PC-3 (cell line): ENCODE measurements at regions of chr4 and their contacts with region 1.

Region 1: GRCh38 chr4:64617800-64618199 is 208.6 kb upstream of the TECRL start:
- DNase-seq: peak; percentile 77
- ATAC-seq: peak; percentile 67
- H3K4me3 ChIP-seq: no peak overlapping the region
- H3K27ac ChIP-seq: no peak overlapping the region
- H3K4me1 ChIP-seq: peaks cover 4% of the 10 kb centered on the region; the same call in 1 of the 2 replicates
- H3K27me3 ChIP-seq: no peaks in the 10 kb centered on the region
- CTCF ChIP-seq: peak; percentile 80

Region 2: DNA sequence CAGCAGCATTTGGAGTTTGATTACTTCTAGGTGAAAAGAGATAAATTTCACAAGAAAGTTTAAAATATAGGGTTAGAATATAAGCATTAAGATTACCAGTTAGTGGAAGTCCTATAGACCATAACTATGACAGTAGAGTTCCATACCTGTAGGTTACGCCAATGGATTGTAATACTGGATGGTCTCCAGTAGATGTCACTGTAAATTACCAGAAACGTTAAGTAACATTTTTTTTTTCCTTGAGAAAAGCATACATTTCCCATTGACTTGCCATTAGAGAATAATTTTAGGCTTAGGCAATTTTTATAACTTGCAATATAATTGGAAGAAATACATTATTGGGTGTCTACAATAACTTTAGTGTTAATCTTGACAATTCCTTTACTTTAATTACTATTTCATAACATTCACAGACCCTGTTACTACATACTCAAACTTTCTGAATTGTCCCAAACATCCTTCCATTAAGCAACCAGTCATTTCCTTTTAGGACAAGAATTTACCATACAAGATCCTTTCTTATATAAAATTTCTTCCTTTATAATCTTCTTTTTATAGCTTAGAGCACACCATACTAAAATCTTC is 95.5 kb after region 1 on chr4:
- CTCF ChIA-PET with region 1: interaction called, 22 read pairs
- POLR2A ChIA-PET with region 1: no interaction called
- intact Hi-C with region 1: loop called (anchors 1 kb)
- DNase-seq: peak; percentile 81
- ATAC-seq: peak; percentile 52
- H3K4me3 ChIP-seq: no peak overlapping the region
- H3K27ac ChIP-seq: no peak overlapping the region
- H3K4me1 ChIP-seq: peaks cover 2% of the 10 kb centered on the region; the same call in 1 of the 2 replicates
- H3K27me3 ChIP-seq: no peaks in the 10 kb centered on the region
- CTCF ChIP-seq: peak; percentile 82

Region 3: DNA sequence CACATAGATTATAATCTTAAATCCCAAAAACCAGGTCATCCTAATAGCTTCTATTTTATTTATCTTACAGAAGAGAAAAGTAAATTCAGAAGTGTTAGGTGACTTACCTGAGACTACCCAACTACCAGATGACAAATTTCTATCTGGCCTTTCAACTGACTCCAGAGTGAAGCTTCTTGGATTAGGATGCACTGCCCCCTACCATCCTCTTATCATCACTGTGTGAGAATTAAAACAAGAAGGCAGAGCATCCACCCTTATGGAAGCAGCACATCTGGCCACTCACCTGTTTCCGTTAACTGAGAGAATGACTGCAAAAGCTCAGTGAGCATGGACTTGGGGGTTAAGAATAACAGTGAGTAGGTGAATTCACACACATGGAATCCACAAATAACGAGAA is 294.0 kb after region 1 on chr4:
- CTCF ChIA-PET with region 1: no interaction called
- POLR2A ChIA-PET with region 1: no interaction called
- intact Hi-C with region 1: loop called (anchors 5 kb)
- DNase-seq: peak; percentile 41
- ATAC-seq: peak; percentile 70
- H3K4me3 ChIP-seq: no peak overlapping the region
- H3K27ac ChIP-seq: no peak overlapping the region
- H3K4me1 ChIP-seq: no peaks in the 10 kb centered on the region
- H3K27me3 ChIP-seq: no peaks in the 10 kb centered on the region
- CTCF ChIP-seq: peak; percentile 52; the same call in 1 of the 2 replicates

Region 4: DNA sequence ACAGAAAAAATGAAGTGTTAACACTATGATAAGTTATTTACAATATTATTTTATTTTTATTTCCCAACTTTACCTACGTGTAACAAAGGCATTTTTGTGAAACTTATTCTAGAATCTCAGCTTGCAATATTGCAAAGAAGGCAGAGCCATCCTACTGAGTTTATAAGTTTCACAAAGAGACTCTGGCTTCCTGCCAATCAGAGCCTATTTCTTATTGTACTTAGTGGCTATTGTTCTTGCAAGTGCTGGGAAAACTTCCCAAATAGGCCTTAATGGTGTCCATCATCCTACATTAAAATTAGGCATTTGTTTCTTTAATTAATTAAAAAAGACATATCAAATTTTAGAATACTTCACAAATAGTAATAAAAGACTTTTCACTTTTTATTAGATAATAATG is 819.3 kb after region 1 on chr4:
- CTCF ChIA-PET with region 1: no interaction called
- POLR2A ChIA-PET with region 1: no interaction called
- intact Hi-C with region 1: no loop called
- DNase-seq: no peak
- ATAC-seq: no peak
- H3K4me3 ChIP-seq: no peak overlapping the region
- H3K27ac ChIP-seq: no peak overlapping the region
- H3K4me1 ChIP-seq: no peaks in the 10 kb centered on the region
- H3K27me3 ChIP-seq: no peaks in the 10 kb centered on the region
- CTCF ChIP-seq: no peak